Activated naive CD4-positive, alpha-beta T cell treated with anti-CD3 and anti-CD28 coated beads, Interleukin-2, amount 10 ng/mL, durations not matched to agents 7 days and 5 days (primary cell): ENCODE measurements at regions of chr17 and their contacts with region 1.

Region 1: GRCh38 chr17:13010959-13011358 is 6.9 kb downstream of the ELAC2 start:
- DNase-seq: no peak
- H3K4me3 Mint-ChIP-seq: no peak overlapping the region
- H3K27ac Mint-ChIP-seq: no peak overlapping the region
- H3K4me1 Mint-ChIP-seq: peaks cover 12% of the 10 kb centered on the region
- H3K27me3 Mint-ChIP-seq: no peaks in the 10 kb centered on the region

Region 2: DNA sequence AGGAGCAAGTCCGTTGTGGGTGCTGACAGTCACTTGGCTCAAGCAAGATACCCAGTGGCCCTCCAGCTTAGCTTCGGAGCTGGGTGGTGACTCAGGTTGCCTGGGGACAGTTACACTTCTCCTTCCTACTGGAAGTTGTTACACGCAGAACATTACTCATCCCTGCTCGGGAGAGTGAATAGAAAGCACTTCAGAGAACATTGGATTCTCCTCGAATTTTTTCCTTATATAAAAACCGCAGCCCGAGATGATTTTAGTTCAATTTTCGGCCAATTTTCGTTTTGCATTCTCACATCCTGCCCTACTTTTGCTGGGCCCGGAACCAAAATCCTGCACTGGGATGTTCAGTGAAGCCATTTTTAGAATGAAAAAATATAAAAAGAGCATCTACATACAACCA is 92.8 kb before region 1 on chr17:
- CTCF ChIA-PET with region 1: no interaction called
- DNase-seq: no peak
- H3K4me3 Mint-ChIP-seq: no peak overlapping the region
- H3K27ac Mint-ChIP-seq: no peak overlapping the region
- H3K4me1 Mint-ChIP-seq: no peaks in the 10 kb centered on the region
- H3K27me3 Mint-ChIP-seq: no peaks in the 10 kb centered on the region

Region 3: DNA sequence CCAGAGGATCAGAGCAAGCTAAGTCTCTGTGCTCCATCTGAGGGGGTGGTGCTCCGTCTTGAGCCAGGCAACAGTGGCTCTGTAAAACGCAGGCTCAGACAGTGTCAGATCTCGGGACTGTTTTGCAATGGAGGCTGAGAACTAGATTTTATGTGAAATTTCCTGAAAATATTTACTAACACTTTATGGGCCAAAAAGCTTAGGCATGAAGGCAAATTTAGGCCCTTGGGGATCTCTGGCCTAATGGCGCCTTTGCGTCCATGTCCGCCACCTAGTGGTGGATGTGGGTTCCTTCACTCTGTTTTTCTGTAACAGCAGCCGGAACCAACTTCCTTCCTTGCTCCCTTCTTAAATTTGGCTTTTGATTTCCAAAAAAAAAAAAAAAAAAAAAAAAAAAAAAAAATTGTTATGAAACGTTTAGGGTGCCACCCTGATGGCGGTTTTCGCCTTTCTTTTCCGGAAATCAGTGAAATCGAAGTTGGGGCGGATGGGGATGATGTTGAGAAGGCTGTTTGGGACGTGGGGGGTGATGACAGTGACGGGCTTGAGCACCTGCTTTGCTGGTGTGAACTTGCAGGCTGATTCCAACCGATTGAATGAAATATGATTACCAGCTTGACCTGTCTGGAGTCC is 20.9 kb after region 1 on chr17:
- CTCF ChIA-PET with region 1: interaction called, 19 read pairs
- DNase-seq: peak; percentile 61
- H3K4me3 Mint-ChIP-seq: no peak overlapping the region
- H3K27ac Mint-ChIP-seq: peak overlapping the region; percentile 42
- H3K4me1 Mint-ChIP-seq: peaks cover 16% of the 10 kb centered on the region
- H3K27me3 Mint-ChIP-seq: peaks cover 8% of the 10 kb centered on the region

Region 4: GRCh38 chr17:13182462-13183253 is 171.7 kb after region 1 on chr17:
- CTCF ChIA-PET with region 1: no interaction called
- DNase-seq: no peak
- H3K4me3 Mint-ChIP-seq: no peak overlapping the region
- H3K27ac Mint-ChIP-seq: no peak overlapping the region
- H3K4me1 Mint-ChIP-seq: no peaks in the 10 kb centered on the region
- H3K27me3 Mint-ChIP-seq: no peaks in the 10 kb centered on the region